B cell (primary cell): ENCODE measurements at regions of chr16 and their contacts with region 1.

Region 1: GRCh38 chr16:15949210-15950160 is at the start of gene ABCC1:
- DNase-seq: peak; percentile 77
- ATAC-seq: peak; percentile 81
- H3K4me3 ChIP-seq: peak within 1 kb of the TSS; percentile 65 to 87 (median 77)
- H3K4me3 Mint-ChIP-seq: peak within 1 kb of the TSS; percentile 97
- H3K27ac ChIP-seq: peak within 1 kb of the TSS; percentile 78 to 80
- H3K27ac Mint-ChIP-seq: peak within 1 kb of the TSS; percentile 95
- H3K4me1 ChIP-seq: peaks cover 18 to 33% of the 10 kb centered on the region in 2 donors
- H3K4me1 Mint-ChIP-seq: peaks cover 38% of the 10 kb centered on the region
- H3K27me3 ChIP-seq: no peaks in the 10 kb centered on the region
- H3K27me3 Mint-ChIP-seq: no peaks in the 10 kb centered on the region
- CTCF ChIP-seq: peak; percentile 19
- total RNA-seq, gene ABCC1: 73.0 and 74.1 TPM in 2 replicates

Region 2: DNA sequence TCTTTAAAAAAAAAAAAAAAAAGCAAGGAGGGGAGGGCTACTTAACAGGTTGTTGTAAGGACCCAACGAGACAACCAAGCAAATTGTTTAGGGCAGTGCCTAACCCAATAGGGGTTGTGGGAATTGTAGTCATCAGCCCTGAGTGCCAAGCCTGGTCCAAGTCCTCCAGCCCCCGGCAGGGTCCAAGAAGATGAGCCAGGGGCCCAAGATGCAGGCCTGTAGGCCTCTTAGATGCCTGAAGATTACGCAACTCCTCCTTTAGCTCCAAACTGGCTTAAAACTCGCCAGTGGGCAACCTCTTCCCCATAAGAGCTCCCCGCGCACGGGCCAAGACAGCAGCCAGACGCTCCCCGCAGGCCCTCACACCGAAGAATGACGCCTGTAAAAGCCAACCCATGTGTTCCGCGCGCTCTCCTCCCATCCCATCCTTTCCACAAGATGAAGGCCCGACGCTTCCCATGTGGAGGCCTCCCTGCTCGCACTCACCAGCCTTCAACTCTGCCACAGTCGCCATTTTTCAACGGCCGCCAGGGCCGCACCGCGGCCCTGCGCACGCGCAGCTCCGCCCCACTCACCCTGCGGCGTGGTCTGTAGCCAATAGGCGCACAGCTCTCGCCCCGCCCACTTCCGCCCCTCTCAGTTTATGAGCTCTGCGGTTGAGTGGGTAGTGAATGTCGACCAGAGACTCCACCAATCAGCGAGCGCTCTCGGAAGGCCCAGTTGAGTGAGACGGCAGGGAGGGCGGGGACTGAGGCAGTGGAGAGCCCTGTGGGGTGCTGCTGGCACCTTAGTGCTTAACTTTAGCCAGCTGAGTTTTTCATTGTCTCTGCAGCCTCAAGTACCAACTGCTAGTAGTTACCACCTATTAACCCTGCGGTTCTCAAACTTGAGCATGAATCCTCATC is 61.2 kb before region 1 on chr16 and contains the start of gene CEP20:
- CTCF ChIA-PET with region 1: interaction called, 3 read pairs
- POLR2A ChIA-PET with region 1: interaction called, 8 read pairs
- intact Hi-C with region 1: loop called (anchors 1 kb)
- DNase-seq: peak; percentile 100
- ATAC-seq: peak; percentile 98
- H3K4me3 ChIP-seq: peak within 1 kb of the TSS; percentile 66 to 99 (median 96)
- H3K4me3 Mint-ChIP-seq: peak within 1 kb of the TSS; percentile 95
- H3K27ac ChIP-seq: peak within 1 kb of the TSS; percentile 64 to 76
- H3K27ac Mint-ChIP-seq: peak within 1 kb of the TSS; percentile 95
- H3K4me1 ChIP-seq: peaks cover 14 to 16% of the 10 kb centered on the region in 2 donors
- H3K4me1 Mint-ChIP-seq: peaks cover 31% of the 10 kb centered on the region
- H3K27me3 ChIP-seq: no peaks in the 10 kb centered on the region
- H3K27me3 Mint-ChIP-seq: no peaks in the 10 kb centered on the region
- CTCF ChIP-seq: no peak
- total RNA-seq, gene CEP20: 29.3 and 30.2 TPM in 2 replicates

Region 3: GRCh38 chr16:15928261-15929104 is 21.0 kb before region 1 on chr16:
- CTCF ChIA-PET with region 1: interaction called, 3 read pairs
- POLR2A ChIA-PET with region 1: interaction called, 13 read pairs
- intact Hi-C with region 1: no loop called
- DNase-seq: no peak
- ATAC-seq: no peak
- H3K4me3 ChIP-seq: no peak overlapping the region
- H3K4me3 Mint-ChIP-seq: no peak overlapping the region
- H3K27ac ChIP-seq: no peak overlapping the region
- H3K27ac Mint-ChIP-seq: no peak overlapping the region
- H3K4me1 ChIP-seq: no peaks in the 10 kb centered on the region
- H3K4me1 Mint-ChIP-seq: no peaks in the 10 kb centered on the region
- H3K27me3 ChIP-seq: no peaks in the 10 kb centered on the region
- H3K27me3 Mint-ChIP-seq: peaks cover 4% of the 10 kb centered on the region
- CTCF ChIP-seq: no peak

Region 4: GRCh38 chr16:15961060-15961511 is 11.6 kb after region 1 on chr16:
- CTCF ChIA-PET with region 1: no interaction called
- POLR2A ChIA-PET with region 1: interaction called, 6 read pairs
- intact Hi-C with region 1: loop called (anchors 1 kb)
- DNase-seq: peak; percentile 72
- ATAC-seq: peak; percentile 85
- H3K4me3 ChIP-seq: peak overlapping the region in 2 of 5 experiments; percentile 15 to 25
- H3K4me3 Mint-ChIP-seq: peak overlapping the region; percentile 66
- H3K27ac ChIP-seq: peak overlapping the region; percentile 12 to 76
- H3K27ac Mint-ChIP-seq: peak overlapping the region; percentile 84
- H3K4me1 ChIP-seq: peaks cover 20 to 25% of the 10 kb centered on the region in 2 donors
- H3K4me1 Mint-ChIP-seq: peaks cover 41% of the 10 kb centered on the region
- H3K27me3 ChIP-seq: no peaks in the 10 kb centered on the region
- H3K27me3 Mint-ChIP-seq: no peaks in the 10 kb centered on the region
- CTCF ChIP-seq: no peak

Region 5: GRCh38 chr16:16007743-16008111 is 58.2 kb after region 1 on chr16:
- CTCF ChIA-PET with region 1: interaction called, 7 read pairs
- POLR2A ChIA-PET with region 1: interaction called, 3 read pairs
- intact Hi-C with region 1: loop called (anchors 2 kb)
- DNase-seq: peak; percentile 91
- ATAC-seq: peak; percentile 81
- H3K4me3 ChIP-seq: peak overlapping the region in 4 of 5 experiments; percentile 0 to 46 (median 22)
- H3K4me3 Mint-ChIP-seq: peak overlapping the region; percentile 75
- H3K27ac ChIP-seq: peak overlapping the region; percentile 94 to 96
- H3K27ac Mint-ChIP-seq: peak overlapping the region; percentile 99
- H3K4me1 ChIP-seq: peaks cover 30 to 42% of the 10 kb centered on the region in 2 donors
- H3K4me1 Mint-ChIP-seq: peaks cover 45% of the 10 kb centered on the region
- H3K27me3 ChIP-seq: no peaks in the 10 kb centered on the region
- H3K27me3 Mint-ChIP-seq: no peaks in the 10 kb centered on the region
- CTCF ChIP-seq: no peak

Region 6: GRCh38 chr16:16127469-16128116 is 178.1 kb after region 1 on chr16:
- CTCF ChIA-PET with region 1: interaction called, 3 read pairs
- POLR2A ChIA-PET with region 1: no interaction called
- intact Hi-C with region 1: loop called (anchors 2 kb)
- DNase-seq: peak; percentile 75
- ATAC-seq: peak; percentile 92
- H3K4me3 ChIP-seq: no peak overlapping the region
- H3K4me3 Mint-ChIP-seq: no peak overlapping the region
- H3K27ac ChIP-seq: no peak overlapping the region
- H3K27ac Mint-ChIP-seq: peak overlapping the region; percentile 46
- H3K4me1 ChIP-seq: peaks cover 0 to 3% of the 10 kb centered on the region in 2 donors
- H3K4me1 Mint-ChIP-seq: peaks cover 3% of the 10 kb centered on the region
- H3K27me3 ChIP-seq: no peaks in the 10 kb centered on the region
- H3K27me3 Mint-ChIP-seq: no peaks in the 10 kb centered on the region
- CTCF ChIP-seq: peak; percentile 95